Activated CD4-positive, alpha-beta memory T cell treated with anti-CD3 and anti-CD28 coated beads for 36 hours (primary cell): ENCODE measurements at regions of chr5 and their contacts with region 1.

Region 1: DNA sequence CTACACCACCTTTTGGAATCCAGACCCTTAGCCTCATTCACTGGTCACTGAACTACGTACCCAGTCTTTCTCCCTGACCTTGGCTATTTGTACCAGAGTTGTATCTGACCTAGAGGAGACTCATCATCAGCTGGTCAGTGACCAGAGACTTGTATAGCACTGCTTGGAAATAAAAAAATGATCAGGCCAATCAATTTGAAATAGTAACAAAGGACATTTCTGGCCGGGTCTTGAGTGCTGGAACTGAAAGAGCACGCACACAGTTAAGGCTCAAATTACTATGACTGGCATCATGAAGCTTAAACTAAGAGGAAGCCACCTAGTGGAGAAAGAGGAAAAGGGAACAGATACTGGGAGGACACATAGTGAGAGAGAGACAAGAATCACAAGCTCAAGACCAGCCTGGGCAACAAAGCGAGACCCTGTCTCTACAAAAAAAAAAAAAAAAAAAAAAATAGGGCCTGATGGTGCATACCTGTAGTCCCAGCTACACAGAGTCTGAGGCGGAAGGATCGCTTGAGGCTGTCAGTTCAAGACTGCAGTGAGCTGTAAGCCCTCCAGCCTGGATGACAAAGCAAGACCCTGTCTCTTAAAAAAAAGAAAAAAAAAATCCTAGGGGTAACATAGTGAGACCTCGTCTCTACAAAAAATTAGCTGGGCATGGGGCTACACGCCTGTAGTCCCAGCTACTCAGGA is 12.8 kb upstream of the SRP19 start:
- DNase-seq: no peak
- H3K4me3 Mint-ChIP-seq: no peak overlapping the region
- H3K27ac Mint-ChIP-seq: no peak overlapping the region
- H3K4me1 Mint-ChIP-seq: peaks cover 4% of the 10 kb centered on the region
- H3K27me3 Mint-ChIP-seq: no peaks in the 10 kb centered on the region

Region 2: GRCh38 chr5:112691758-112692157 is 156.5 kb before region 1 on chr5:
- CTCF ChIA-PET with region 1: no interaction called
- POLR2A ChIA-PET with region 1: no interaction called
- intact Hi-C with region 1: loop called (anchors 1 kb)
- DNase-seq: peak; percentile 27
- H3K4me3 Mint-ChIP-seq: no peak overlapping the region
- H3K27ac Mint-ChIP-seq: no peak overlapping the region
- H3K4me1 Mint-ChIP-seq: no peaks in the 10 kb centered on the region
- H3K27me3 Mint-ChIP-seq: peaks cover 22% of the 10 kb centered on the region

Region 3: DNA sequence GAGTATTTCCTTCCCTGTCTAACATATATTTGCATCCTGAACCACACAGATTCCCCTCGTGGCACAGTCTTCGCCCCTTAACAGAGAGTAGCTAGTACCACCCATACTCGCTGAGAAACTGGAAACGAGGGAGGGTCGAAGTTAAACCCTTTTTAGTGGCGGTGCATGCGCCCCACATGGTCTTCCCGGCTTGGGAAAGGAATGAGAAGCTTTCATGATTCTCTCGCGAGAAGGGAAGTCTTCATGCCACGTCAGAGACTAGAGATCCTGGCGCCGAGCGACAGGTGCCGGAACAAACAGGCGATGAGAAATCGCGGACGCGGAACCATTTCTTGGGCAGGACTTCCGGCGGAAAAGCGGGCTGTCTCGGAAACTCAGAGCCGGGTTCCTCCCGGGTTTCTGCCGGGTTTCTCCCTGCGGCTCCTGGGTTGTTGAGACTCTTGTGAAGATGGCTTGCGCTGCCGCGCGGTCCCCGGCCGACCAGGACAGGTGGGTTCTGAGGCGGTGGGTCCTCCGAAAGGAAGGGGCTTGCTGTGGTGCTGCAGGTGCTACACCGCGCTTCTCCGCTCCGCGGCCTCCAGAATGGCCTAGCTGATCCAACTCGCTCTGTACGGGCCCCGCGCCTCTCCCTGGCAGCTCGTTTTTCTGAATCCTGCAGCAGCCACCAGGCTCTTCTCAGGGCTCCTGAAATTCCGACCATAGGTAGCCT is 12.8 kb after region 1 on chr5 and contains the start of gene SRP19:
- CTCF ChIA-PET with region 1: interaction called, 14 read pairs
- POLR2A ChIA-PET with region 1: no interaction called
- intact Hi-C with region 1: no loop called
- DNase-seq: peak; percentile 95
- H3K4me3 Mint-ChIP-seq: peak within 1 kb of the TSS; percentile 86
- H3K27ac Mint-ChIP-seq: peak within 1 kb of the TSS; percentile 95
- H3K4me1 Mint-ChIP-seq: peaks cover 33% of the 10 kb centered on the region
- H3K27me3 Mint-ChIP-seq: peaks cover 3% of the 10 kb centered on the region
- total RNA-seq, gene SRP19: 49.1 to 51.6 TPM